Activated T-helper 1 cell treated with anti-CD3 and anti-CD28 coated beads, Interleukin-12 subunit alpha, Interleukin-12 subunit beta, Interleukin-2, Interleukin-4 antibody, amounts not matched to agents 30 ng/mL and 10 ng/mL and 1 ng/mL, durations not matched to agents 14 hours and 24 hours and 36 hours (primary cell): ENCODE measurements at regions of chr3 and their contacts with region 1.

Region 1: DNA sequence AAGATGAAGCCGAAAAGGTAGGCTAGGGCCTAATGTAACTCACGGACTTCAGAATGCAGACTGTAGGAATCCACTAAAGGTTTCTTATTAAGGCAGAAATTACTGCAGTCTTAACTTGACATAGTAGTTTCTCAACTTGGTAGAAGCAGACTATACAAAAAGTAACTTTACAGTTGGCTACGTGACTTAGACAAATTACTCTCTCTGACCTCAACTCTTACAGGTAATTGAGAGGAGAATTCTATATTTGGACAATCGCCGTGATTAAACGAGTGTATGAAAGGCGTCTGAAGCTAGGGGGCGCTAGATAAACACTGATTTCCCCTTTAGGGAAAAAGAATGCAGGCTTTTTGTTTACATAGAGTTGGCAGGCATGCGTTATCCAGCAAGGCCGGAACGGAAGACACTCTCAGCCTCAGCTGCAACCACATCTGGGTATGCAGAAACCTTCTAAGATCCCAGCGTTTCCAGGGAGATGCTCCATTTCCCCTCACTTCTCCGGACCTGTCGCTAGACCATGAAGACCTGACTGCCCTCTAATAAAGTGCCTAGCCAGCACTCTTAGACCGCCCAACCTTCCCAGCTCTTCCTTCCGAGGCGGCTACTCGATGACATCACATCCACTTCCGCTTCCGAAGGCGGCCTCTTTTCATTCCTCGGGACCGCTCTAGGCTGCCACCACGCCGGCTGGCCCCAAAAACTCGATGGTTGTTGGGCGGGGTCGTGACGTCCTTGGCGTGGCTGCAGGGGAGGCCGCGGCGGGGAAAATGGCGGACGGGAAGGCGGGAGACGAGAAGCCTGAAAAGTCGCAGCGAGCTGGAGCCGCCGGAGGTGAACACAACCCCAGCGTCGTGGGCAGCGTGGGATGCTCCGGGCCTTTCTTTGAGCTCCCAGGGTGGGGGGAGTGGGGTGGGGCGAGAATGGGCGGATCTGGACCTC is at the start of gene PCNP:
- DNase-seq: peak; percentile 99
- H3K4me3 Mint-ChIP-seq: peak within 1 kb of the TSS; percentile 94
- H3K27ac Mint-ChIP-seq: peak within 1 kb of the TSS; percentile 99
- H3K4me1 Mint-ChIP-seq: peaks cover 68% of the 10 kb centered on the region
- H3K27me3 Mint-ChIP-seq: no peaks in the 10 kb centered on the region
- total RNA-seq, gene PCNP: 182 and 190 TPM in 2 replicates

Region 2: DNA sequence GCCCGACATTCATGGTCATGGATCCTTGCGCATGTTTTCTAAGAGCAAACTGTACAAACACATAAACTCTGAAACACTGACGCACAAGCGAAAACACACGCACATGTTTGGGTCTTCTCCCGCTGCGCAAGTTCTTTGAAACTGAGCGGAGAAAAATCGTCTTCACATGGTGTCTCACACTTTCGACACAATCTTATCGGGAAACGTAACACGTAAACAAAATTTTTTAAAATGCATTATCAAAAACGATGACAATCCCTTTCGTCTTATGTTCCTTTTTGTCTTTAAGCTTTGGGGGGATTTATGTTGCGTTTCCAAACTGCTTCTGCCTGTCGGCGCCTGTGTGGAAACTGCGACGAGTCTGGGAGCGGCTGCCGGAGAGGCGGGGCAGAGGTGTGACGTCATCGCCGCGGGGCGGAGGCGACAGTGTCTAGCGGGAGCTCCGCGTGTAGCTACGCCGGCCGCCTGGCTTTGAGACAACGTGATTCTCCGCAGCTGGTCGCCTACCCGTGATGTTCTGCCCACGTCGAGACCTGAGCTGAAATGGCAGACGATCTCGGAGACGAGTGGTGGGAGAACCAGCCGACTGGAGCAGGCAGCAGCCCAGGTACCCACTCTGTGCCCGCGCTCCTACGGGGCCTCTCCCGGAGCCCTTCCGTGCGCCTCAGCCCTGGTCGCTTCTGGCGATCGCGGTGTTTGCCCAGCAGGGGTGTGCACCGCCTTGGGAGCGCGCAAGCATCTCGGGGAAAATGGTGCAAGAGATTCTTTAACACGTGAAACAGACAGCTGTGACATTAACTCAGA is 1756.1 kb before region 1 on chr3 and contains the start of gene CMSS1:
- intact Hi-C with region 1: loop called (anchors 10 kb)
- DNase-seq: peak; percentile 92
- H3K4me3 Mint-ChIP-seq: peak within 1 kb of the TSS; percentile 88
- H3K27ac Mint-ChIP-seq: peak within 1 kb of the TSS; percentile 90
- H3K4me1 Mint-ChIP-seq: peaks cover 35% of the 10 kb centered on the region
- H3K27me3 Mint-ChIP-seq: no peaks in the 10 kb centered on the region
- total RNA-seq, gene CMSS1: 108 and 121 TPM in 2 replicates

Region 3: GRCh38 chr3:101381809-101382208 is 191.9 kb before region 1 on chr3:
- intact Hi-C with region 1: loop called (anchors 2 kb)
- DNase-seq: no peak
- H3K4me3 Mint-ChIP-seq: no peak overlapping the region
- H3K27ac Mint-ChIP-seq: no peak overlapping the region
- H3K4me1 Mint-ChIP-seq: peaks cover 36% of the 10 kb centered on the region
- H3K27me3 Mint-ChIP-seq: peaks cover 2% of the 10 kb centered on the region

Region 4: GRCh38 chr3:101518421-101518871 is 55.3 kb before region 1 on chr3:
- intact Hi-C with region 1: loop called (anchors 1 kb)
- DNase-seq: peak; percentile 63
- H3K4me3 Mint-ChIP-seq: peak overlapping the region; percentile 32
- H3K27ac Mint-ChIP-seq: peak overlapping the region; percentile 77
- H3K4me1 Mint-ChIP-seq: peaks cover 49% of the 10 kb centered on the region
- H3K27me3 Mint-ChIP-seq: no peaks in the 10 kb centered on the region

Region 5: DNA sequence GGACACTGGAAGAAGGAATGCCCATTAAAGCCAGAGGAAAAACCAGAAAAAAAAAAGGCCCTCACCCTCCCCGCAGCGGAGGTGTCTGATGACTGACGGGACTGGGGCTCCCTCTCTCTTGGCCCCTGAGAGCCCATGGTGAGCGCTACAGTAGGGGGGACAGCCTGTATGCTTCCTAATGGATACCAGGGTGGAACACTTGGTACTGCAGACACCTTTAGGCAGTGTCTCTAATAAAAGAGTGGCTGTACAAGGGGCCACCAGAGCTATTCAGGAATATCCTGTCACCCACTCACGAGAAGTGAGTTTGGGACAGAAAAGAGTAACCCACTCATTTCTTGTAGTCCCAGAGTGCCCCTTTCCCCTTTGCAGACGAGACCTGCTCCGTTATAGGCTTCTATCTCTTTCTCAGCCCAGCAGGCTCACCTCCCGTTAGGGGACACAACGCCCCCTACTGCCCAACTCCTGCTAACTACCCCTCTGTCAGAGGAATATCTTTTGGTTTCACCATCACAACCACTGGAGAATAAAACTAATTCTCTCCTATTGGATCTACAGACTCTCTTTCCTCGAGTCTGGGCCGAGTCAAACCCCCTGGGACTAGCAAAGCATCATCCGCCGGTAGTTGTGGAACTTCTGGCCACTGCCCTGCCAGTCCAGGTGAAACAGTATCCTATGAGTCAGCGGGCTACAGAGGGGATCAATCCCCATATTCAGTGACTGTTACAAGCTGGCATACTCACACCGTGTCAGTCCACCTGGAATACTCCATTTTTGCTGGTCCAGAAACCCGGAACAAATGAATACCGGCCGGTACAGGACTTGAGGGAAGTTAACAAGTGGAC is 62.5 kb after region 1 on chr3:
- intact Hi-C with region 1: loop called (anchors 1 kb)
- DNase-seq: peak; percentile 56
- H3K4me3 Mint-ChIP-seq: no peak overlapping the region
- H3K27ac Mint-ChIP-seq: no peak overlapping the region
- H3K4me1 Mint-ChIP-seq: no peaks in the 10 kb centered on the region
- H3K27me3 Mint-ChIP-seq: peaks cover 4% of the 10 kb centered on the region

Region 6: GRCh38 chr3:101724329-101725193 is 150.8 kb after region 1 on chr3 and contains the start of gene CEP97:
- intact Hi-C with region 1: loop called (anchors 1 kb)
- DNase-seq: peak; percentile 85
- H3K4me3 Mint-ChIP-seq: peak within 1 kb of the TSS; percentile 94
- H3K27ac Mint-ChIP-seq: peak within 1 kb of the TSS; percentile 96
- H3K4me1 Mint-ChIP-seq: peaks cover 54% of the 10 kb centered on the region
- H3K27me3 Mint-ChIP-seq: no peaks in the 10 kb centered on the region
- total RNA-seq, gene CEP97: 20.2 and 20.6 TPM in 2 replicates